ENCODE measurements at regions of chr12 and their contacts with region 1.

Region 1: DNA sequence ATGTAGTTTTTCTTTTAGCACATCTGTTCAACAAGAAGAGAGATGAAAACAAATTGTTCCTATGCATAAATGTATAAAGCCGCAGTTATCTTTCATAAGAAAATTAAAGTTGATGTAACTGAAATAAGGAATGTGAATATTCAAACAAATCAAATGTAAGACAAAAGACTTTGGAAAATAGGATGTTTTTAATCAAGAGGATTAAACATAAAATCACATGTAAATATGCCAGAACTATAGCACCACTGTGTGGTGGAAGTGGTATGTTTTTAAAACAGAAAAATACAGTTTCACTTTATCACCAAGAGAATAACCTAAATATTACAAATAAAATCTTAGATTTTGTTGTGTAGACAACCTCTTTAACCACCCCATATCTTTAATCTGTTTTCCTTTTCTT is 40.4 kb downstream of the CAPS2 start:
- DNase-seq: no peak
- H3K4me3 ChIP-seq: no peak overlapping the region
- H3K27ac ChIP-seq: no peak overlapping the region
- H3K4me1 ChIP-seq: no peaks in the 10 kb centered on the region
- H3K27me3 ChIP-seq: no peaks in the 10 kb centered on the region
- CTCF ChIP-seq: no peak

Region 2: GRCh38 chr12:74689929-74690328 is 599.8 kb before region 1 on chr12:
- intact Hi-C with region 1: loop called (anchors 10 kb)
- DNase-seq: no peak
- H3K4me3 ChIP-seq: no peak overlapping the region
- H3K27ac ChIP-seq: no peak overlapping the region
- H3K4me1 ChIP-seq: no peaks in the 10 kb centered on the region
- H3K27me3 ChIP-seq: no peaks in the 10 kb centered on the region
- CTCF ChIP-seq: no peak

Region 3: GRCh38 chr12:74791365-74791764 is 498.4 kb before region 1 on chr12:
- intact Hi-C with region 1: loop called (anchors 10 kb)
- DNase-seq: no peak
- H3K4me3 ChIP-seq: no peak overlapping the region
- H3K27ac ChIP-seq: no peak overlapping the region
- H3K4me1 ChIP-seq: no peaks in the 10 kb centered on the region
- H3K27me3 ChIP-seq: no peaks in the 10 kb centered on the region
- CTCF ChIP-seq: no peak

Region 4: GRCh38 chr12:75120311-75120711 is 169.4 kb before region 1 on chr12:
- intact Hi-C with region 1: no loop called
- DNase-seq: no peak
- H3K4me3 ChIP-seq: no peak overlapping the region
- H3K27ac ChIP-seq: no peak overlapping the region
- H3K4me1 ChIP-seq: no peaks in the 10 kb centered on the region
- H3K27me3 ChIP-seq: no peaks in the 10 kb centered on the region
- CTCF ChIP-seq: no peak

Region 5: DNA sequence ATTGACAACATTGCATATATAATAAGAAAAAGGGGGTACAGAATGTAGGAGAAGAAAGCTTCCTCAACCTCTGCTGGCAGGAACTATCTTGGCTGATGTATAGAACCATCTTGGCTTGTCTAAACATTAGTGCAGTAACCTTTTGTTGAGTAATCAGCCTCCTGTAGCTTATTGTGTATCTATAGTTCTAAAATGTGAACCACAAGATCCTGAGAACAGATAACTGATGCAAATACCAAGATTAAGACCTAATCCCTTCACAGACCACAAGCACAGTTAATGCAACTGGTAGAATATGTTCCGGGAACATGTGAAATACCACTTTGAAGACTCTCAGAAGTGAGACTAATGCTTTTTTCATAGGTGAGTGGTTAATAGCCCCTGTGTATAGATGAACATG is 29.4 kb before region 1 on chr12:
- intact Hi-C with region 1: no loop called
- DNase-seq: no peak
- H3K4me3 ChIP-seq: no peak overlapping the region
- H3K27ac ChIP-seq: no peak overlapping the region
- H3K4me1 ChIP-seq: no peaks in the 10 kb centered on the region
- H3K27me3 ChIP-seq: no peaks in the 10 kb centered on the region
- CTCF ChIP-seq: no peak